ENCODE measurements at regions of chr22 and their contacts with region 1.

Region 1: GRCh38 chr22:24189249-24190158 is 8.2 kb downstream of the SUSD2 start:
- DNase-seq: no peak
- H3K4me3 ChIP-seq: no peak overlapping the region
- H3K27ac ChIP-seq: peak overlapping the region; percentile 25
- H3K4me1 ChIP-seq: peaks cover 15% of the 10 kb centered on the region
- H3K27me3 ChIP-seq: no peaks in the 10 kb centered on the region
- CTCF ChIP-seq: peak; percentile 36 to 97 (median 83)
- POLR2A ChIP-seq: no peak

Region 2: DNA sequence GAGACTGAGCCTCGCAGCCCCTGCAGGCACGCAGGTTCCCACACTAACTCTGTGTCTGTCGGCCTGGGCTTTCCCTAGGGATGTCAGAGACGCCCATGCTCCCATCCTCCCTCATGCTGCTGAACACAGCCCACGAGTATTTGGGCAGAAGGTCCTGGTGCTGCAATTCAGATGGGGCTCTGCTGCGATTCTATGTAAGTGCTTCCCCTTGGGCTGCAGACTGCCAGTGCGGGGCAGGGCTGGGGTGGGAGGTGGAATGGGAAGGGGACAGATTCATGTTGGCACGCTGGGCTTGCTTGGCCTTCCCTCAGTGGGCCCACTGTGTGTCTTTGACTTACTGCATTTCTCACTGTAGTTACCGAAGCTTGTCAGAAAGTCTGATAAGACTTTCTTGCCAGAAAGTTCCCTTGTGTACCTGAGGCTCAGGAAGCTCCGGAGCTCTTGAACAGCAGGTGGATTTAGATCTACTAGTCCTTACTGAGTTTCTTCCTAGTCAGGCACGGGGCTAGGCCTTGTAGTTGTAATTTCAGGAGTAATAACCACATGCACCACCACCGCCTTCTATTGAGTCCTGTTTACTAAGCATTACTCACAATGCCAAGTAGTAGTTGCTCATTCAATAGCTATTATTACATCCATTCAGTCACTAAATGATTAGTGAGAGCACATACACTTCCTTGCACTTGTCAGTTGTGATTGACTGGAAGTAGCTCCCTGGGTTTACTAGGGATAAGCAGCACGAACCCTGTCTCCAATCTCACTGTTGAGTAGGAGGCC is 113.2 kb before region 1 on chr22:
- intact Hi-C with region 1: no loop called
- DNase-seq: no peak
- H3K4me3 ChIP-seq: no peak overlapping the region
- H3K27ac ChIP-seq: no peak overlapping the region
- H3K4me1 ChIP-seq: no peaks in the 10 kb centered on the region
- H3K27me3 ChIP-seq: no peaks in the 10 kb centered on the region
- CTCF ChIP-seq: no peak
- POLR2A ChIP-seq: no peak

Region 3: GRCh38 chr22:24247011-24247507 is 57.6 kb after region 1 on chr22:
- intact Hi-C with region 1: loop called (anchors 5 kb)
- DNase-seq: no peak
- H3K4me3 ChIP-seq: no peak overlapping the region
- H3K27ac ChIP-seq: peak overlapping the region; percentile 89
- H3K4me1 ChIP-seq: peaks cover 50% of the 10 kb centered on the region
- H3K27me3 ChIP-seq: no peaks in the 10 kb centered on the region
- CTCF ChIP-seq: no peak
- POLR2A ChIP-seq: no peak

Measured in vagina (tissue), 2 donors.